Naive thymus-derived CD4-positive, alpha-beta T cell (primary cell): ENCODE measurements at regions of chr16 and their contacts with region 1.

Region 1: DNA sequence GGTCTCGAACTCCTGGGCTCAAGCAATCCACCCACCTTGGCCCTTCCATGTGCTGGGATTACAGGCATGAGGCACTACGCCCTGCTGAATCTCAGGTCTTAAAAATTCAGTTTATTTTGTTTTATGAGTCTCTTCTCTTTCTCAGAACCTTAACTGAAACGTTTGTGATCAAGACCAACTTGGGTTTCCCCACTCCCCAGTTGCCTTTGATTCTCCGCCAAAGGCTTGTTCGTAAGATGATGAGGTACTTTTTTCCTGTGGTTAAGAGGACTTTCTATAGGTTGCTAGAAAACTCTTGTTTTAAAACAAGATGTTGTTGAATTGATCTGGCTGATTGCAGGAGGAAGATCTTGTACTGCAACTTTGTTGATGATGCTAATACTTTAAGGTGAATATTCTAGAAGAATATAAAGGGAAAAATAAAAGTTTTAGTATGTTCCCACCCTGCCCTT is 11.7 kb downstream of the ABCC1 start:
- DNase-seq: peak; percentile 17 to 94 (median 91)
- ATAC-seq: peak; percentile 91
- H3K4me3 ChIP-seq: peak overlapping the region; percentile 55
- H3K4me3 Mint-ChIP-seq: peak overlapping the region; percentile 54 to 92 (median 88)
- H3K27ac ChIP-seq: peak overlapping the region; percentile 91
- H3K27ac Mint-ChIP-seq: peak overlapping the region; percentile 96 to 99 (median 98)
- H3K4me1 ChIP-seq: peaks cover 32 to 34% of the 10 kb centered on the region in 2 donors
- H3K4me1 Mint-ChIP-seq: peaks cover 31 to 86% (median 72%) of the 10 kb centered on the region in 7 donors
- H3K27me3 ChIP-seq: no peaks in the 10 kb centered on the region
- H3K27me3 Mint-ChIP-seq: no peaks in the 10 kb centered on the region

Region 2: GRCh38 chr16:14632692-14633569 is 1328.2 kb before region 1 on chr16 and contains the start of gene BFAR:
- CTCF ChIA-PET with region 1: no interaction called
- POLR2A ChIA-PET with region 1: no interaction called
- intact Hi-C with region 1: loop called in 1 of 2 experiments (anchors 10 kb)
- DNase-seq: peak; percentile 95 to 99 (median 99)
- ATAC-seq: peak; percentile 85
- H3K4me3 ChIP-seq: peak within 1 kb of the TSS; percentile 89
- H3K4me3 Mint-ChIP-seq: peak within 1 kb of the TSS; percentile 92 to 100 (median 100)
- H3K27ac ChIP-seq: peak within 1 kb of the TSS; percentile 93
- H3K27ac Mint-ChIP-seq: peak within 1 kb of the TSS; percentile 94 to 100 (median 99)
- H3K4me1 ChIP-seq: peaks cover 38 to 45% of the 10 kb centered on the region in 2 donors
- H3K4me1 Mint-ChIP-seq: peaks cover 32 to 76% (median 68%) of the 10 kb centered on the region in 7 donors
- H3K27me3 ChIP-seq: no peaks in the 10 kb centered on the region
- H3K27me3 Mint-ChIP-seq: no peaks in the 10 kb centered on the region
- total RNA-seq, gene BFAR: 43.9 to 82.0 (median 66.0) TPM

Region 3: DNA sequence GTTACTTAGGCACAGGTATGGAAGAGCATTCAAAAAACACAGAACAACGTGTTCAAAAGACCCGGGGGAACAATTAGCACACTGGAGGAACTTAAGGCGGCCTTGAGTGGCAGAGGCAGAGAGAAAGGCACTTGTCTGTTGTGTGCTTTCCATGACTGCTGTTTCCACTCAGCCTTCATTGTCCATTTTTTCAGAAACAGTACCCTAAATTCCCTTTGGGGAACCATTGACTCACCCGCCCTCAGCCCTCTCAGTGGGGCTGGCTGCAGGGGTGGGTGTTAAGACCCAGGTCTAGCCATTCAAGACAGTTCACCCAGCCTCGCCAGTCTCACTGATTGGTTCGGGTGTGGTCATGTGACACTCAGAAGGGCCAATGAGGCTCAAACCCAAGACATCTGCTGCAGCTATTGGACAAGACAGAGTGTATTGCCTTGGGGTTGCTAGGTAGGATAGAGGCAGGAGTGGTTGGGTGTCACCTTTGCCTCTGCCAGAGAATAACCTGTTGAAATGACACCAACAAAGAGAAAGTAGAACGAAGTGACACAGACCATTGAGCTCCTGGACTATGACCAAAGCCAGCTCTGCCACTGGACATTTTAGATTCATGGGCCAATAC is 53.1 kb before region 1 on chr16:
- CTCF ChIA-PET with region 1: no interaction called
- POLR2A ChIA-PET with region 1: no interaction called
- intact Hi-C with region 1: loop called in 1 of 2 experiments (anchors 1 kb)
- DNase-seq: peak in 3 of 9 donors; percentile 7 to 44 (median 22)
- ATAC-seq: peak; percentile 80
- H3K4me3 ChIP-seq: no peak overlapping the region
- H3K4me3 Mint-ChIP-seq: no peak overlapping the region
- H3K27ac ChIP-seq: no peak overlapping the region
- H3K27ac Mint-ChIP-seq: no peak overlapping the region
- H3K4me1 ChIP-seq: no peaks in the 10 kb centered on the region
- H3K4me1 Mint-ChIP-seq: peaks cover 8 to 15% (median 12%) of the 10 kb centered on the region in 7 donors
- H3K27me3 ChIP-seq: no peaks in the 10 kb centered on the region
- H3K27me3 Mint-ChIP-seq: peaks cover 0 to 4% (median 0%) of the 10 kb centered on the region in 5 donors

Region 4: DNA sequence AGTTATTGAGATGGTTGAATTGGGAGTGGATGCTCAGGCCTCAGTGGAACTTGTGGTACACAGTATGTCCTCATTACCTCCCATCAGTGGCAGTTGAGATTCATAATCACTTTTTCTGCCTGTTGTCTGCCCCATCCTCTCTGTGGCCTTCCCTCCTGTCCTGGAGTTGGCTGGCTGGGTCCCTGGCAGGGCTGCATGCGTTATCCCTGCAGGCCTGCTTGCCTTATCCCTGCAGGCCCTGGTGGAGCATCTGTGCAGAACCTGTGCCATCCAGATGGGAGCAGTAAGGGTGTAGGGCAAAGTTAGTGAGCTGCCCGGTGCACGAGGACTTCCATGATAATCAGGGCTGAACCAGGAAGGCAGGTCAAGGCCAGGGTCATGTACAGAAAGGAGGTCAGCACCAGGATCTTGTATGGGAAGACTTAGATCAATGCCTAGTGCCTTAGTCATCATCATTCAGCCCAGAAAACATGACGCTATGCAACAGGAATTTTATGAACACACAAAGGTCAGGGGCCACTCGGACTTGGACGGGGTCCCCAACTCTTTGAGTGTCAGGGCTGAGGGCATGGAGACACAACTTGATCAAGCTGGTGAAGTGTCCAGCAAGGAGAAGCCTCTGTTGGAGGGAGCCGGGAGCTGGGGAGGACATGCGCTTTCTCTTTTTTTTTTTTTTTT is 35.5 kb after region 1 on chr16:
- CTCF ChIA-PET with region 1: no interaction called
- POLR2A ChIA-PET with region 1: interaction called, 3 read pairs
- intact Hi-C with region 1: loop called (anchors 5 kb)
- DNase-seq: no peak
- ATAC-seq: no peak
- H3K4me3 ChIP-seq: no peak overlapping the region
- H3K4me3 Mint-ChIP-seq: no peak overlapping the region
- H3K27ac ChIP-seq: no peak overlapping the region
- H3K27ac Mint-ChIP-seq: peak overlapping the region in 2 of 9 donors; percentile 36 to 52
- H3K4me1 ChIP-seq: peaks cover 4 to 6% of the 10 kb centered on the region in 2 donors
- H3K4me1 Mint-ChIP-seq: peaks cover 29 to 56% (median 45%) of the 10 kb centered on the region in 7 donors
- H3K27me3 ChIP-seq: no peaks in the 10 kb centered on the region
- H3K27me3 Mint-ChIP-seq: no peaks in the 10 kb centered on the region

Region 5: GRCh38 chr16:16033208-16033717 is 72.2 kb after region 1 on chr16:
- CTCF ChIA-PET with region 1: no interaction called
- POLR2A ChIA-PET with region 1: interaction called, 3 read pairs
- intact Hi-C with region 1: loop called in 1 of 2 experiments (anchors 2 kb)
- DNase-seq: peak in 7 of 9 donors; percentile 14 to 45 (median 25)
- ATAC-seq: peak; percentile 83
- H3K4me3 ChIP-seq: no peak overlapping the region
- H3K4me3 Mint-ChIP-seq: peak overlapping the region in 8 of 10 donors; percentile 8 to 42 (median 35)
- H3K27ac ChIP-seq: peak overlapping the region; percentile 3
- H3K27ac Mint-ChIP-seq: peak overlapping the region; percentile 5 to 92 (median 77)
- H3K4me1 ChIP-seq: peaks cover 9 to 17% of the 10 kb centered on the region in 2 donors
- H3K4me1 Mint-ChIP-seq: peaks cover 7 to 28% (median 26%) of the 10 kb centered on the region in 7 donors
- H3K27me3 ChIP-seq: no peaks in the 10 kb centered on the region
- H3K27me3 Mint-ChIP-seq: no peaks in the 10 kb centered on the region